B cell (primary cell): ENCODE measurements at regions of chr4 and their contacts with region 1.

Region 1: DNA sequence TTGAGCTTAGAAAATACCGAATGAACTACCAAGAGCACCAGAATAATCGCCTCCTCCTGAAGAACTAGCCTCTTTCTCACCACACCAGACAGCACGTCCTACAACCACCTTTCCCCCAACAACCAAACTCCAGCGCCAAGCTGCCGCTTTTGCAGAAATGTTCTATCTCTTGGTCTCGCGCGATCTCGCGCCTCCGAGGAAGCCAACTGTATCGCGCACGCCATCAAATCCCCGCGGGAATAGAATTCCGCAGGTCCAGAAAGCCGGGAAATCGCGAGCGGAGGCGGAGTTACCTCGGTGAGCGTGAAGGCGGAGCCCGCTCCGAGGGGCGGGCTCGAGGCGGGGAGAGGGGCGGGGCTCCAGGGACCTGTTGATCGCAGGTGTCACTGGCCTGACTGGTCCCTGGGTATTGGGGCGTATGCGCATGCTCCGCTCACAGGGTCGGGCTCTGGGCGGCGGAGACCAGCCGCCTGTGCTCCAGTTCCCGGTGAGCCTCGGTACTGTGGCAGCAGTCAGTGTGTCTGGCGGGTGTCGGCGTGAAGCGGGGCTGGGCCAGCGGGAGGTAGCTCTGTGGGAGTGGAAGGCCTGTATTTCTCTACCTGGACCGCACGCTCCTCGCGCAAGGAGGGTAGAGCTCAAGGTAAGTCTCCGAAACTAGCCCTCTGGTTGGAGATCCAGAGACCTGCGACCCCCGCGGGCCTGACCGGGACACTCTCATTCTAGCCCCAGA is at the start of gene USP53:
- DNase-seq: peak; percentile 98
- ATAC-seq: peak; percentile 92
- H3K4me3 ChIP-seq: peak within 1 kb of the TSS; percentile 65 to 91 (median 76)
- H3K4me3 Mint-ChIP-seq: peak within 1 kb of the TSS; percentile 95
- H3K27ac ChIP-seq: peak within 1 kb of the TSS; percentile 76 to 81
- H3K27ac Mint-ChIP-seq: peak within 1 kb of the TSS; percentile 96
- H3K4me1 ChIP-seq: peaks cover 2 to 15% of the 10 kb centered on the region in 2 donors
- H3K4me1 Mint-ChIP-seq: peaks cover 39% of the 10 kb centered on the region
- H3K27me3 ChIP-seq: no peaks in the 10 kb centered on the region
- H3K27me3 Mint-ChIP-seq: no peaks in the 10 kb centered on the region
- CTCF ChIP-seq: no peak
- total RNA-seq, gene USP53: 45.0 and 57.1 TPM in 2 replicates

Region 2: GRCh38 chr4:118167306-118167705 is 1045.1 kb before region 1 on chr4:
- CTCF ChIA-PET with region 1: no interaction called
- POLR2A ChIA-PET with region 1: no interaction called
- intact Hi-C with region 1: no loop called
- DNase-seq: no peak
- ATAC-seq: no peak
- H3K4me3 ChIP-seq: no peak overlapping the region
- H3K4me3 Mint-ChIP-seq: no peak overlapping the region
- H3K27ac ChIP-seq: no peak overlapping the region
- H3K27ac Mint-ChIP-seq: no peak overlapping the region
- H3K4me1 ChIP-seq: no peaks in the 10 kb centered on the region
- H3K4me1 Mint-ChIP-seq: no peaks in the 10 kb centered on the region
- H3K27me3 ChIP-seq: no peaks in the 10 kb centered on the region
- H3K27me3 Mint-ChIP-seq: no peaks in the 10 kb centered on the region
- CTCF ChIP-seq: no peak

Region 3: GRCh38 chr4:118278473-118279274 is 933.7 kb before region 1 on chr4:
- CTCF ChIA-PET with region 1: no interaction called
- POLR2A ChIA-PET with region 1: no interaction called
- intact Hi-C with region 1: loop called (anchors 1 kb)
- DNase-seq: peak; percentile 99
- ATAC-seq: peak; percentile 99
- H3K4me3 ChIP-seq: peak overlapping the region; percentile 81 to 95 (median 90)
- H3K4me3 Mint-ChIP-seq: peak overlapping the region; percentile 95
- H3K27ac ChIP-seq: peak overlapping the region; percentile 95 to 96
- H3K27ac Mint-ChIP-seq: peak overlapping the region; percentile 91
- H3K4me1 ChIP-seq: peaks cover 25 to 28% of the 10 kb centered on the region in 2 donors
- H3K4me1 Mint-ChIP-seq: peaks cover 43% of the 10 kb centered on the region
- H3K27me3 ChIP-seq: no peaks in the 10 kb centered on the region
- H3K27me3 Mint-ChIP-seq: no peaks in the 10 kb centered on the region
- CTCF ChIP-seq: no peak

Region 4: DNA sequence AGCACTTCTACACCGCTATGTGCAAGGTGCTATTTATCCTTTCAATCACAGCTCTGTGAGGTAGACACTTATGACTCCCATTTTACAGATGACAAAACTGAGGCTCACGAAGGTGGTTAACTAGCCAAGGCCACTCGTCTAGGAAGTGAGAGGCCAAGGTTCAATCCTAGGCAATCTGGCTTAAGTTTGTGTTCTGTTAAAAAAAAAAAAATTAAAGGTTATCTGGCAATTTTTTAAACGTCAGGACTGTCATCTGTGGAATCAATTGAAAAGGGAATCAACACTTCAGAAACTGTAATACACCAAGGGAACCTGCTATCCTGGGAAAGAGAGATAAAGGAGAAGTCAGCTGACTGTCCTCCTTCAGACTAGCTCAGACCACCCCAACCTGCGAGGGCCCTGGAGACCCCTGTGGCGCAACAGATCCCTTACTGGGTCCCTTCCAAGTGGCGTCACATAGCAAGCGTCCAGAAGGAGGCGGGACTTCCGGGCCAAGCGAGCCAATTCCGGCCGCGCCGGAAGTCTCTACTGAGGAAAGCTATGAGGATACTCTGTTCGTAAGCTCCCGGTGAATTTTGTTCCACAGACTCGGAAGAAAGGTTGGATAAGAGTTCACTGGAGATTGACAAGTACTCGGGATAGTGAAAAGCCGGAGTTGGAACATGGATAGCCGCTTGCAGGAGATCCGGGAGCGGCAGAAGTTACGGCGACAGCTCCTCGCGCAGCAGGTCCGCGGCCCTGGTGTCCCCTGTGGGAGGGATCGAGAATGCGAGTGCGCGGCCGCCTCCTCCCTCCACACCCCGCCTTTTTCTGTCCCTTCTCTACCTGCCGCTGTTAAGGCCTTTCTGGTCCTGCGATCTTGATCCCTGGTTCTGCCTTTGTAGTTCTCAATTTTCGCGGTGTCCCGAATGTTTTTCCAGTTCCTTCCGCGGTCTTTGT is 527.3 kb before region 1 on chr4 and contains the start of gene METTL14:
- CTCF ChIA-PET with region 1: no interaction called
- POLR2A ChIA-PET with region 1: no interaction called
- intact Hi-C with region 1: loop called (anchors 5 kb)
- DNase-seq: peak; percentile 93
- ATAC-seq: peak; percentile 96
- H3K4me3 ChIP-seq: peak within 1 kb of the TSS; percentile 63 to 94 (median 83)
- H3K4me3 Mint-ChIP-seq: peak within 1 kb of the TSS; percentile 95
- H3K27ac ChIP-seq: peak within 1 kb of the TSS; percentile 71 to 86
- H3K27ac Mint-ChIP-seq: peak within 1 kb of the TSS; percentile 93
- H3K4me1 ChIP-seq: peaks cover 11 to 16% of the 10 kb centered on the region in 2 donors
- H3K4me1 Mint-ChIP-seq: peaks cover 21% of the 10 kb centered on the region
- H3K27me3 ChIP-seq: no peaks in the 10 kb centered on the region
- H3K27me3 Mint-ChIP-seq: no peaks in the 10 kb centered on the region
- CTCF ChIP-seq: no peak
- total RNA-seq, gene METTL14: 65.6 and 74.8 TPM in 2 replicates

Region 5: DNA sequence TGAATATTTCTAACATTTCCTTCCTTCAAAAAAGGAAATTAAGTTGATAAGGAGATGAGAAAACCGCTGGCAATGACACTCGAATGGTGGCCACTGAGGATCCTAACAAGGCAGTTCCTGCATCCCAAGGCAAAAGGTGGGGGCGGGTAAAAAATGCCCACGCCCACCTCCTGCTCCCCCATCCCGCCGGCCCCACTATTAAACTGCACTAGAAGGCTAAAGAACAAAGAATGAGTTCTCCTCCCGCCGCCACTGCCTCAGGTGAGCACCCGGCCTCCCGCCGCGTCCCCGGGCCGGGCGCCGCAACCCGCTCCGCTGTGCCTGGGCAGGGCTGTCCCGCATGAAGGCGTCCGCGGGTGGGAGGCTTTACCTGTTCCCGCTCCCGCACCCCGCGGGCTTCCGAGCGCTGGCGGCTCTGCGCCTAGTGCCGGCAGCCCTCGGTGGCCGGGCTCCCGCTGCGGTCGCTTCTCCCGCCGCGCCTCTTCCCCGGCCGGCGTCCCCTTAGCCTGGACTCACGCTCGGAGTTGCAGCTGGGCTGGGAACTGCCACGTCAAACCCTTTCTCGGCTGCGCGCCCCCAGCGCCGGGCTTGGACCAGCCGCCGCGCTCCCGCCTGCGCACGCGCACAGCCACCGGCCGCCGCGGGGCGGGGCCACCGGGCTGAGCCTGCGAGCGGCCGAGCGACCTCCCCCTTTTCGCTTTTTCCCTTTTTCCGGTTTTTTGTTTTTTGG is 376.7 kb before region 1 on chr4 and contains the start of gene SEC24D:
- CTCF ChIA-PET with region 1: no interaction called
- POLR2A ChIA-PET with region 1: no interaction called
- intact Hi-C with region 1: loop called (anchors 5 kb)
- DNase-seq: peak; percentile 89
- ATAC-seq: peak; percentile 88
- H3K4me3 ChIP-seq: peak within 1 kb of the TSS; percentile 59 to 98 (median 89)
- H3K4me3 Mint-ChIP-seq: peak within 1 kb of the TSS; percentile 97
- H3K27ac ChIP-seq: peak within 1 kb of the TSS; percentile 48 to 87
- H3K27ac Mint-ChIP-seq: peak within 1 kb of the TSS; percentile 93
- H3K4me1 ChIP-seq: peaks cover 10 to 11% of the 10 kb centered on the region in 2 donors
- H3K4me1 Mint-ChIP-seq: peaks cover 17% of the 10 kb centered on the region
- H3K27me3 ChIP-seq: no peaks in the 10 kb centered on the region
- H3K27me3 Mint-ChIP-seq: peaks cover 4% of the 10 kb centered on the region
- CTCF ChIP-seq: peak; percentile 11
- total RNA-seq, gene SEC24D: 15.8 and 19.8 TPM in 2 replicates

Region 6: DNA sequence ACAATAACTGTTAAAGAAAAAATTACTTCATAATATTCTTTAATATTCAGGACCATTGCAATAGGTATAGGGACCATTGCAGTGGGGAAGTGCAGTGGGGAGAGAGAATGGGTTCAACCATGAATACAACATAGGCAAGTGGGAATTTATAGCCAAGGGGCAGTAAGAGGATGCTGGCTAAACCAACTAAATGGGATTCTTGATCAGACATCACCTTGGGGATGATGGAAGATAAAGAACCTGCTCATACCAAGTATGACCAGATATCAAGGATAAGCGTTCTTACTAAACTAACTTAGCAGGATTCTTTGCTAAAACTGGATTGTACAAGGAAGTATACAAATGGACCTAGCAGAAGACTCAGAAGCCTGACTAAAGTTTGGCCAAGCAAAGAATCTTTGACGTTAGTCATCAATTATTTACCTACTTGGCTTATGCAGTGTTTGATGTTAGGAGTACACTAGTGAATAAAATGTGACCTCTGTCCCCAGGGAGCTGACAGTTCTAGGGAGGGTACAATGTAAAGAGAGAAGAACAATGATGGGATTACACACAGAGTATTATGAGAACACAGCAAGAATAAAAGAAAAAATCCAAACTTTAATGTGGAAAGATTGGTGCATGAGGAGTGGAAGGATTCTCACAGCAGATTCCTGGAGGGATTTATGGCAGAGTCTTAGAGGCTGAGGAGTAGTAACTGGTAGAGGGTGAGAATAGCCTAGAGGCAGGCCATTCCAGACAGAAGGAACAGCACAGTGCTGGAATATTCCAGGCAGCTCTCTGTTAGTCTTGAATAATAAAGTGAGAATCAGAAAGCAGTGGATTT is 131.5 kb before region 1 on chr4:
- CTCF ChIA-PET with region 1: no interaction called
- POLR2A ChIA-PET with region 1: no interaction called
- intact Hi-C with region 1: loop called (anchors 5 kb)
- DNase-seq: no peak
- ATAC-seq: no peak
- H3K4me3 ChIP-seq: no peak overlapping the region
- H3K4me3 Mint-ChIP-seq: no peak overlapping the region
- H3K27ac ChIP-seq: no peak overlapping the region
- H3K27ac Mint-ChIP-seq: no peak overlapping the region
- H3K4me1 ChIP-seq: no peaks in the 10 kb centered on the region
- H3K4me1 Mint-ChIP-seq: peaks cover 24% of the 10 kb centered on the region
- H3K27me3 ChIP-seq: peaks cover 0 to 3% (median 0%) of the 10 kb centered on the region in 4 experiments
- H3K27me3 Mint-ChIP-seq: no peaks in the 10 kb centered on the region
- CTCF ChIP-seq: no peak

Region 7: GRCh38 chr4:119139822-119140252 is 72.6 kb before region 1 on chr4:
- CTCF ChIA-PET with region 1: interaction called, 3 read pairs
- POLR2A ChIA-PET with region 1: no interaction called
- intact Hi-C with region 1: loop called (anchors 5 kb)
- DNase-seq: peak; percentile 24
- ATAC-seq: peak; percentile 71
- H3K4me3 ChIP-seq: peak overlapping the region in 2 of 5 experiments; percentile 18 to 43
- H3K4me3 Mint-ChIP-seq: peak overlapping the region; percentile 52
- H3K27ac ChIP-seq: peak overlapping the region; percentile 1 to 46
- H3K27ac Mint-ChIP-seq: peak overlapping the region; percentile 83
- H3K4me1 ChIP-seq: peaks cover 16 to 20% of the 10 kb centered on the region in 2 donors
- H3K4me1 Mint-ChIP-seq: peaks cover 36% of the 10 kb centered on the region
- H3K27me3 ChIP-seq: no peaks in the 10 kb centered on the region
- H3K27me3 Mint-ChIP-seq: no peaks in the 10 kb centered on the region
- CTCF ChIP-seq: no peak

Region 8: DNA sequence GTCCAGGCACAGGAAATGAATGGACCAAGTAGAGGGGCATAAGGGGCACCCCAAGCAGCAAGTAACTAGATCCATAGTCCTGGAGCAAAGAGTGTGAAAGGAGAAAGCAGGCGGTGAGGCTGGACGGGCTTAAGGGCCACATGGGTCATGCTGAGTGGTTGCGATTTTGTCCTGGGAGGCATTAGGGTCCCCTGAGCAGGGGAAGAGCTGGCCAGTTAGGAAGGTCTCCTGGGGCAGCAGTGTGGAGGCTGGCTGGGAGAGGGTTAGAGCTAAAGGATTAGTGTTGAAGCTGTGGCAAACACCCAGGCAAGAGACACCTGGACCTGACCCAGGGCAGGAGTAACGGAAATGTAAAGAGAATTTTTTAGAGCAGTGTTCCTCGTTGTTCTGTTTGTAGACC is 50.2 kb before region 1 on chr4:
- CTCF ChIA-PET with region 1: no interaction called
- POLR2A ChIA-PET with region 1: no interaction called
- intact Hi-C with region 1: no loop called
- DNase-seq: no peak
- ATAC-seq: no peak
- H3K4me3 ChIP-seq: no peak overlapping the region
- H3K4me3 Mint-ChIP-seq: no peak overlapping the region
- H3K27ac ChIP-seq: no peak overlapping the region
- H3K27ac Mint-ChIP-seq: no peak overlapping the region
- H3K4me1 ChIP-seq: no peaks in the 10 kb centered on the region
- H3K4me1 Mint-ChIP-seq: no peaks in the 10 kb centered on the region
- H3K27me3 ChIP-seq: peaks cover 0 to 4% (median 0%) of the 10 kb centered on the region in 4 experiments
- H3K27me3 Mint-ChIP-seq: peaks cover 9% of the 10 kb centered on the region
- CTCF ChIP-seq: no peak

Region 9: GRCh38 chr4:119628308-119629141 is 416.1 kb after region 1 on chr4 and contains the start of gene PDE5A:
- CTCF ChIA-PET with region 1: no interaction called
- POLR2A ChIA-PET with region 1: no interaction called
- intact Hi-C with region 1: loop called (anchors 2 kb)
- DNase-seq: peak; percentile 86
- ATAC-seq: peak; percentile 80
- H3K4me3 ChIP-seq: peak within 1 kb of the TSS; percentile 42 to 77 (median 63)
- H3K4me3 Mint-ChIP-seq: peak within 1 kb of the TSS; percentile 87
- H3K27ac ChIP-seq: peak within 1 kb of the TSS; percentile 40 to 51
- H3K27ac Mint-ChIP-seq: peak within 1 kb of the TSS; percentile 47
- H3K4me1 ChIP-seq: peaks cover 18 to 26% of the 10 kb centered on the region in 2 donors
- H3K4me1 Mint-ChIP-seq: peaks cover 26% of the 10 kb centered on the region
- H3K27me3 ChIP-seq: peaks cover 0 to 26% (median 11%) of the 10 kb centered on the region in 4 experiments
- H3K27me3 Mint-ChIP-seq: peaks cover 14% of the 10 kb centered on the region
- CTCF ChIP-seq: peak; percentile 78
- total RNA-seq, gene PDE5A: 1.4 and 2.6 TPM in 2 replicates